HEK293 (cell line): ENCODE measurements at regions of chr6 and their contacts with region 1.

Region 1: GRCh38 chr6:136289579-136290409 is at the start of gene BCLAF1:
- H3K4me3 ChIP-seq: peak within 1 kb of the TSS; percentile 79
- H3K27ac ChIP-seq: peak within 1 kb of the TSS; percentile 95
- H3K4me1 ChIP-seq: peaks cover 13% of the 10 kb centered on the region
- CTCF ChIP-seq: peak; percentile 36; the same call in 1 of the 2 replicates

Region 2: GRCh38 chr6:135497412-135498269 is 792.2 kb before region 1 on chr6 and contains the start of gene AHI1:
- CTCF ChIA-PET with region 1: interaction called, 3 read pairs
- POLR2A ChIA-PET with region 1: interaction called, 10 read pairs
- H3K4me3 ChIP-seq: peak within 1 kb of the TSS; percentile 91
- H3K27ac ChIP-seq: peak within 1 kb of the TSS; percentile 71
- H3K4me1 ChIP-seq: no peaks in the 10 kb centered on the region
- CTCF ChIP-seq: peak; percentile 61

Region 3: DNA sequence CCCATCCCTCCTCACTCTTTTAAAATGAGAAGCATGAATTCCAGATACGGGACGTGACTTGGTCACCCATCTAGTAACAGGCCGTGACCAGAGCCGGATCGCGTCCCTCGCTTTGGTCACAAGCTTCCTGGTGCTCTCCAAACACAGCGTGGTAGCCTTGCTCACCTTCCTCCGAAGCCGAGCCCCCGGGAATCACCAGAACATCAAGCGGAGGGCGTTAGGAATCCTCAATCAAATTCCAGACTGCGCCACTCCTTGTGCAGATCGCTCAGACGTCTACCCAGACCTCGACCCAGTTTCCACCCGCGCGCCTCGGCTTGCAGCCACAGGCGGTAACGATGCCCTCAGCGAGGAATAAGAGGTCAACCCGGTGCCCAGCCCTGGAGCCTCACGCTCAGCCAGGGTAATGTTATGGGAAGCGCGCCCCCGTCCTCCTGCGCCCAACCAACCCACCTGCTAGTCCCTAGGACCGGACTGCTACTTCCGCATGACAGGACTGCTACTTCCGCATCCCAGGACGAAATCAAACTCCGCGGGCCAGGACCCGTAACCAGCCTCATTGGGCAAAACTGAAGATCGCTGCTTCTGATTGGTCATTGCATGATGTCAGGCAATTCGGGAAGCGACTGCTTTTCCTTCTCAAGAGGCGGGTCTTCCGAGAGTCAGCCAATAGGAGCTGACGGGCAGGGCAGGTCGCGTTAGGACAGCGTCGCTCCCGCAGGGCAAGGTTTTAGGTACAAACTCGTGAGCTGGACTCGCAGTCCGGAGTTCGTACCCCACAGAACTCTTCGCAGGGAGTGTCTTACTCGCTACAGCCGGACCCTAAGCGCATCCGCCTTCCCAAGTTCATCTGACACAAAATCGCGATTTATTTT is 39.7 kb before region 1 on chr6 and contains the start of gene MTFR2:
- CTCF ChIA-PET with region 1: no interaction called
- POLR2A ChIA-PET with region 1: interaction called, 80 read pairs
- H3K4me3 ChIP-seq: peak within 1 kb of the TSS; percentile 80
- H3K27ac ChIP-seq: peak within 1 kb of the TSS; percentile 51
- H3K4me1 ChIP-seq: peaks cover 12% of the 10 kb centered on the region; the same call in 1 of the 2 replicates
- CTCF ChIP-seq: peak; percentile 87; the same call in 1 of the 2 replicates

Region 4: DNA sequence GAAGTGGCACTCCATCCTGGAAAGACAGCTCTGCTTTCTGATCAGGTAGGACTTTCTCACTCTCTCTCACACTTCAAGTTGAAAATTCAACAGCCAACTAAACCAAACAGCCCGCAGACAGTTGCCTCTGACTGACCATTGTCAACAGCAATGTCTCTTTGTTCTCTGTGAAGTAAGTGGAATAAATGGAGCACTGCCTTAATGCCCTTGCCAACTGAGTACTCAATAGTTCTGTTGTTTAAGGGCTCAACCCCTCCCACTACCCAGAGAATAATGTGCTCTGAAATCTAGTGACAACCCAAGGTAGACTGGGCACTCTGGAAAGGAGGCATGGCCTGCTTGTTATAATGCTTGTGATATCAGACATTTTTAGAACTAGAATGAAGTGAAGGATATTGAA is 16.7 kb after region 1 on chr6:
- CTCF ChIA-PET with region 1: interaction called, 4 read pairs
- POLR2A ChIA-PET with region 1: interaction called, 20 read pairs
- H3K4me3 ChIP-seq: no peak overlapping the region
- H3K27ac ChIP-seq: no peak overlapping the region
- H3K4me1 ChIP-seq: no peaks in the 10 kb centered on the region
- CTCF ChIP-seq: no peak

Region 5: DNA sequence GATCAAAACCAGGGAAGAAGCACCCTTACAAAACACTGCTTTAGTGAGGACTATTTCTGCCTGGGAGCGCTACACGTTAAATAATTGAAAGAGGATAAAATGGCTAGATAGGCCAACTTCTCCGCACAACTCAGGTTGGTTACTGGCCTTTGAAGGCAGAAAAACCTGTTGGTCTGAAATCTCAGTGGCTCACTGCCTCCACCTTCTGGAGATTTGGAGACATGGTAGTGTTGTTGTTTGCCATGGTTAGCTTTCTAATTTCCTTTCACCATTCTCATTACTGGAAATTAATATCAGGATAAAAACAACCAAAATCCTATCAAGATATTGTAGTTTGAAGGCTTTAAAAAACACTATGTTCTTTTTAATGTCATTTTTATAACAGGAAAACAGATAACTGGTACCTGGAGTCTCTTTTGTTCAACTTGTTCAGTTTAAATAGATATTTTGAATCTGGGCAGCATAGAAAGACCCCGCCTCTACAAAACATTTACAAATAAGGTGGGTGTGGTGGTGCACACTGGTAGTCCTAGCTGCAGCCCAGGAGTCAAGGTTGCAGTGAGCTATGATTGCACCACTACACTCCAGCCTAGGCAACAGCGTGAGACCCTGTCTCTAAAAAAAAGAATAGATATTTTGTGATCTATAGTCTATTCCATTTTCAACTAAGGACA is 27.4 kb after region 1 on chr6:
- CTCF ChIA-PET with region 1: interaction called, 15 read pairs
- POLR2A ChIA-PET with region 1: interaction called, 11 read pairs
- H3K4me3 ChIP-seq: no peak overlapping the region
- H3K27ac ChIP-seq: no peak overlapping the region
- H3K4me1 ChIP-seq: no peaks in the 10 kb centered on the region
- CTCF ChIP-seq: peak; percentile 47